CD8-positive, alpha-beta T cell (primary cell): ENCODE measurements at regions of chr19 and their contacts with region 1.

Region 1: DNA sequence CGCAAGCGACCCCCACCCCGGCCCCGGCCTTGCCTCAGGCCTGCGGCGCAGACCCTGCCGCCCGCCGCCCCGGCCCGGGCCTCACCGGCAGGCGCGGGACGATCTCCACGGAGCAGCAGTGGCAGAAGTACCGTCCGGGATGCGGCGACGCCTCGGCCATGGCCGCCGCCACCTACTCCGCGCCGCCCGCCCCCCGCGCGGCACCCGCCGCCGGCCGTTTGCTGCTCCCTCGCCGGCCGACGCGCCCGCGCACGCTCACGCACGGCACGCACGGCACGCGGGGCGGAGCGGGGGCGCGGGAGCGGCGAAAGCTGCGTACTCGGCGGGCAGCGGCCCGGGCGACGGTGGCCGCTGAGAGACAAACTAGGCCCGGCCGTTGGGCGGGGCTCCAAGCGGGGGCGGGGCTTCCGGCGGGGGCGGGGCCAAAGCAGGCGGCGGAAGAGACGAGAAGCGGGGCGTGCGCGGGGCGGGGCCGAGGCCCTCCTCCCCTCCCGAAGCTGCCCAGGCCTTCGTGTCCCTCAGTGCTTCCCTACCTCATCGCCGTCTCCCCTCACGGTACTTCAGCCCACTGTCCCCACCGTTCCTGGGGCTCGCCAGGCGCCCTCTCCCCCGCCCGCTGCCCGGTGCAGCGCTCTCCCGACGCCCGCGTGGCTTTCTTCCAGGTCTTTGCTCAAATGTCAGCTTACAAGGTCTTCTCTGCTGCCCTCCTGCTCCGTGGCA is at the start of gene RNF126:
- DNase-seq: peak; percentile 91 to 97 (median 94)
- ATAC-seq: peak; percentile 48
- H3K4me3 ChIP-seq: peak within 1 kb of the TSS; percentile 67 to 70
- H3K4me3 Mint-ChIP-seq: peak within 1 kb of the TSS; percentile 96
- H3K27ac ChIP-seq: peak within 1 kb of the TSS; percentile 81 to 94
- H3K27ac Mint-ChIP-seq: peak within 1 kb of the TSS; percentile 99
- H3K4me1 ChIP-seq: peaks cover 45% of the 10 kb centered on the region
- H3K4me1 Mint-ChIP-seq: peaks cover 38% of the 10 kb centered on the region
- H3K27me3 ChIP-seq: peaks cover 0 to 2% of the 10 kb centered on the region in 2 experiments
- H3K27me3 Mint-ChIP-seq: no peaks in the 10 kb centered on the region
- CTCF ChIP-seq: no peak
- total RNA-seq, gene RNF126: 99.7 to 107 TPM

Region 2: GRCh38 chr19:328025-328505 is 335.1 kb before region 1 on chr19:
- CTCF ChIA-PET with region 1: no interaction called
- POLR2A ChIA-PET with region 1: no interaction called
- intact Hi-C with region 1: no loop called
- DNase-seq: no peak
- ATAC-seq: no peak
- H3K4me3 ChIP-seq: no peak overlapping the region
- H3K4me3 Mint-ChIP-seq: no peak overlapping the region
- H3K27ac ChIP-seq: no peak overlapping the region
- H3K27ac Mint-ChIP-seq: no peak overlapping the region
- H3K4me1 ChIP-seq: no peaks in the 10 kb centered on the region
- H3K4me1 Mint-ChIP-seq: no peaks in the 10 kb centered on the region
- H3K27me3 ChIP-seq: no peaks in the 10 kb centered on the region
- H3K27me3 Mint-ChIP-seq: no peaks in the 10 kb centered on the region
- CTCF ChIP-seq: no peak

Region 3: GRCh38 chr19:572140-572742 is 90.9 kb before region 1 on chr19 and contains the start of gene BSG:
- CTCF ChIA-PET with region 1: no interaction called
- POLR2A ChIA-PET with region 1: interaction called, 3 read pairs
- intact Hi-C with region 1: loop called (anchors 1 kb)
- DNase-seq: peak; percentile 96 to 100 (median 99)
- ATAC-seq: peak; percentile 79
- H3K4me3 ChIP-seq: peak within 1 kb of the TSS; percentile 85 to 98
- H3K4me3 Mint-ChIP-seq: peak within 1 kb of the TSS; percentile 89
- H3K27ac ChIP-seq: peak within 1 kb of the TSS; percentile 86 to 90
- H3K27ac Mint-ChIP-seq: peak within 1 kb of the TSS; percentile 96
- H3K4me1 ChIP-seq: peaks cover 26% of the 10 kb centered on the region
- H3K4me1 Mint-ChIP-seq: peaks cover 38% of the 10 kb centered on the region
- H3K27me3 ChIP-seq: no peaks in the 10 kb centered on the region
- H3K27me3 Mint-ChIP-seq: no peaks in the 10 kb centered on the region
- CTCF ChIP-seq: no peak
- total RNA-seq, gene BSG: 76.2 to 81.2 TPM

Region 4: GRCh38 chr19:639253-640160 is 23.6 kb before region 1 on chr19 and contains the start of gene FGF22:
- CTCF ChIA-PET with region 1: no interaction called
- POLR2A ChIA-PET with region 1: interaction called, 6 read pairs
- intact Hi-C with region 1: loop called in 1 of 2 experiments (anchors 1 kb)
- DNase-seq: peak; percentile 91 to 98 (median 96)
- ATAC-seq: peak; percentile 96
- H3K4me3 ChIP-seq: peak within 1 kb of the TSS; percentile 53 to 61
- H3K4me3 Mint-ChIP-seq: peak within 1 kb of the TSS; percentile 84
- H3K27ac ChIP-seq: peak within 1 kb of the TSS in 1 of 2 experiments; percentile 14
- H3K27ac Mint-ChIP-seq: peak within 1 kb of the TSS; percentile 93
- H3K4me1 ChIP-seq: peaks cover 13% of the 10 kb centered on the region
- H3K4me1 Mint-ChIP-seq: peaks cover 9% of the 10 kb centered on the region
- H3K27me3 ChIP-seq: no peaks in the 10 kb centered on the region
- H3K27me3 Mint-ChIP-seq: no peaks in the 10 kb centered on the region
- CTCF ChIP-seq: no peak
- total RNA-seq, gene FGF22: 0.65 to 0.97 TPM

Region 5: GRCh38 chr19:728011-728410 is 64.9 kb after region 1 on chr19:
- CTCF ChIA-PET with region 1: no interaction called
- POLR2A ChIA-PET with region 1: no interaction called
- intact Hi-C with region 1: no loop called
- DNase-seq: peak in 1 of 9 experiments; percentile 7
- ATAC-seq: no peak
- H3K4me3 ChIP-seq: no peak overlapping the region
- H3K4me3 Mint-ChIP-seq: no peak overlapping the region
- H3K27ac ChIP-seq: no peak overlapping the region
- H3K27ac Mint-ChIP-seq: no peak overlapping the region
- H3K4me1 ChIP-seq: no peaks in the 10 kb centered on the region
- H3K4me1 Mint-ChIP-seq: no peaks in the 10 kb centered on the region
- H3K27me3 ChIP-seq: no peaks in the 10 kb centered on the region
- H3K27me3 Mint-ChIP-seq: no peaks in the 10 kb centered on the region
- CTCF ChIP-seq: no peak

Region 6: DNA sequence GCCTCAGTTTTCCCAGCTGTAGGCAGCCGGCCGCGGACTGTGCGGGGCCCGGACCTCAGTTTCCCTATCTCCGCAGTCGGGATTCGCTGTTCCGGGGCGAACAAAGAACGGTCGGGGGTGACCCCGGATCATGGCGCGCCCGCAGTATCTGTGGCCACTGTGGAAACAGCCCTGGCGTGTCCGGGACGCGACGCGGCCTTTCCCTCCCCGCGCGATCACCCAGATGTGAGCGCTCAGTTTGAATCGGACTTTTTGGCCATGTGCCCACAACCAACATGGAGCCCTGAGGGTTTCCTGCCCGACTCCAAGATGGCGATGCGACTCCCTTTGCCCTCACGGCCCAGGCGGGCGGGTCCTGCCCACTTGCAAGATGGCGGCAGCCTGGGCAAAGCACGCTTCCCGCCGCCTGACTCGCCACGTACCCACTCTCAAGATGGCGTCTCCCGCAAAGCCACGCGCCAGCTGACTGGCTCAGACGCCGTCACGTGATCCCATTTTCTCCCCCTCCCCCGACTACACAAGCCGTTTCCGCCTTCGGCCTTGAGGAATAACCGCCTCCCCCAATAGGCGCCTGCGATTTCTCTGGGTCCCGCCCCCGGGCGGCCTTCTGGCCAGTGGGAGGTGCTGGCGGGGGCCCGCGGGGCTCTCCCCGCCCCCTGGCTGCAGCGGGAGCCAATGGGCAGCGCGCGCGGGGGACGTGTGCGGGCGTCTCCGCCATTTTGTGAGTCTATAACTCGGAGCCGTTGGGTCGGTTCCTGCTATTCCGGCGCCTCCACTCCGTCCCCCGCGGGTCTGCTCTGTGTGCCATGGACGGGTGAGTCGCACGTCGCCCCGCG is 133.8 kb after region 1 on chr19 and contains the start of gene PTBP1:
- CTCF ChIA-PET with region 1: no interaction called
- POLR2A ChIA-PET with region 1: interaction called, 5 read pairs
- intact Hi-C with region 1: loop called (anchors 1 kb)
- DNase-seq: peak in 8 of 9 experiments; percentile 98 to 100 (median 99)
- ATAC-seq: peak; percentile 85
- H3K4me3 ChIP-seq: peak within 1 kb of the TSS; percentile 78 to 79
- H3K4me3 Mint-ChIP-seq: peak within 1 kb of the TSS; percentile 93
- H3K27ac ChIP-seq: peak within 1 kb of the TSS; percentile 62 to 75
- H3K27ac Mint-ChIP-seq: peak within 1 kb of the TSS; percentile 91
- H3K4me1 ChIP-seq: peaks cover 40% of the 10 kb centered on the region
- H3K4me1 Mint-ChIP-seq: peaks cover 32% of the 10 kb centered on the region
- H3K27me3 ChIP-seq: no peaks in the 10 kb centered on the region
- H3K27me3 Mint-ChIP-seq: no peaks in the 10 kb centered on the region
- CTCF ChIP-seq: no peak
- total RNA-seq, gene PTBP1: 248 to 266 TPM

Region 7: GRCh38 chr19:850221-850978 is 187.3 kb after region 1 on chr19:
- CTCF ChIA-PET with region 1: no interaction called
- POLR2A ChIA-PET with region 1: no interaction called
- intact Hi-C with region 1: no loop called
- DNase-seq: peak in 1 of 9 experiments; percentile 21
- ATAC-seq: no peak
- H3K4me3 ChIP-seq: no peak overlapping the region
- H3K4me3 Mint-ChIP-seq: no peak overlapping the region
- H3K27ac ChIP-seq: no peak overlapping the region
- H3K27ac Mint-ChIP-seq: no peak overlapping the region
- H3K4me1 ChIP-seq: no peaks in the 10 kb centered on the region
- H3K4me1 Mint-ChIP-seq: no peaks in the 10 kb centered on the region
- H3K27me3 ChIP-seq: peaks cover 0 to 16% of the 10 kb centered on the region in 2 experiments
- H3K27me3 Mint-ChIP-seq: peaks cover 27% of the 10 kb centered on the region
- CTCF ChIP-seq: no peak

Region 8: DNA sequence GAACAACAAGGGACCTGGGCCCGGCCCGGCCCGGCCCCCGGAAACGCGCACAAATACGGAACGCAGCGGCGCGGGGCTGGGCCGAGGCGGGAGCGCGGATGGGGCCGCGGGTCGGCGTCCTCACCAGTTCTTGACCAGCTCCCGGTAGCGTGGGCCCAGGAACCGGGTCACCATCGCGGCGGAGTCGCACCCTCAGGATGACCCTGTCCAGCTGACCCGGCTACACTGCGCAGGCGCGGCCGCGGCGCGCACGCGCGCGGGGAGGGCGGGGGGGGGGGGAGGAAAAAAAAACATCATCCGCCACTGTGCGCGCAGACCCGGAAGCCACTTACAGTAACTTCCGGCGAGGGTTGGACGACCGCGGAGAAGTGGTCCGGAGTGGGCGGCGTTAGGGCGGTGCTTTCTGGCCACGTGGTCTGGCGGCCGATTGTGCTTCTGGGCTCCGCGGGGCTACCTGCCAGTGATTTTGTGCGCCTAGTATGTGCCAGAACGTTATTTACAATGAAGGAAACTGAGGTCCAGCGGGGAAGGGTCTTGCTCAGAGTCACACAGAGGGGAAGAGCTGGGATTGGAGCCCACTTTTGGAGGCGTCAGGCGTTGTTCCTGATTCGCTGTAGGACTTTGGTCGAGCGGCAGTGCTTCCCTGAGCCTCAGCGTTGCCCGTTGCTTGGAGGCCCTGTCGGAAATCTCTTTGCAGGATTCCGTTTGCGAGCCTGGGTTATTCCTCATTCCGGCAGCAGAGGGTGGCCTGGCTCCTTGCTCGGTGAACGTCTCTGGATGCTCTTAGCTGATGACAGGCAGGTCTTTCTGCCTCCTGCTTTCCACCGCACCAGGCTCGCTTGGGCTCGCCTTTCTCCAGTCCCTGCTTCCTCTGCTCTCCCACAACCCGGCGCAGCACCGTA is 942.4 kb after region 1 on chr19 and contains the start of gene UQCR11:
- CTCF ChIA-PET with region 1: no interaction called
- POLR2A ChIA-PET with region 1: no interaction called
- intact Hi-C with region 1: loop called in 1 of 2 experiments (anchors 10 kb)
- DNase-seq: peak; percentile 76 to 96 (median 93)
- ATAC-seq: peak; percentile 83
- H3K4me3 ChIP-seq: peak within 1 kb of the TSS; percentile 76 to 100
- H3K4me3 Mint-ChIP-seq: peak within 1 kb of the TSS; percentile 99
- H3K27ac ChIP-seq: peak within 1 kb of the TSS; percentile 72 to 82
- H3K27ac Mint-ChIP-seq: peak within 1 kb of the TSS; percentile 99
- H3K4me1 ChIP-seq: peaks cover 51% of the 10 kb centered on the region
- H3K4me1 Mint-ChIP-seq: peaks cover 55% of the 10 kb centered on the region
- H3K27me3 ChIP-seq: no peaks in the 10 kb centered on the region
- H3K27me3 Mint-ChIP-seq: no peaks in the 10 kb centered on the region
- CTCF ChIP-seq: peak; percentile 90
- total RNA-seq, gene UQCR11: 97.1 to 98.0 TPM